PC-9 (cell line): ENCODE measurements at regions of chr1 and their contacts with region 1.

Region 1: DNA sequence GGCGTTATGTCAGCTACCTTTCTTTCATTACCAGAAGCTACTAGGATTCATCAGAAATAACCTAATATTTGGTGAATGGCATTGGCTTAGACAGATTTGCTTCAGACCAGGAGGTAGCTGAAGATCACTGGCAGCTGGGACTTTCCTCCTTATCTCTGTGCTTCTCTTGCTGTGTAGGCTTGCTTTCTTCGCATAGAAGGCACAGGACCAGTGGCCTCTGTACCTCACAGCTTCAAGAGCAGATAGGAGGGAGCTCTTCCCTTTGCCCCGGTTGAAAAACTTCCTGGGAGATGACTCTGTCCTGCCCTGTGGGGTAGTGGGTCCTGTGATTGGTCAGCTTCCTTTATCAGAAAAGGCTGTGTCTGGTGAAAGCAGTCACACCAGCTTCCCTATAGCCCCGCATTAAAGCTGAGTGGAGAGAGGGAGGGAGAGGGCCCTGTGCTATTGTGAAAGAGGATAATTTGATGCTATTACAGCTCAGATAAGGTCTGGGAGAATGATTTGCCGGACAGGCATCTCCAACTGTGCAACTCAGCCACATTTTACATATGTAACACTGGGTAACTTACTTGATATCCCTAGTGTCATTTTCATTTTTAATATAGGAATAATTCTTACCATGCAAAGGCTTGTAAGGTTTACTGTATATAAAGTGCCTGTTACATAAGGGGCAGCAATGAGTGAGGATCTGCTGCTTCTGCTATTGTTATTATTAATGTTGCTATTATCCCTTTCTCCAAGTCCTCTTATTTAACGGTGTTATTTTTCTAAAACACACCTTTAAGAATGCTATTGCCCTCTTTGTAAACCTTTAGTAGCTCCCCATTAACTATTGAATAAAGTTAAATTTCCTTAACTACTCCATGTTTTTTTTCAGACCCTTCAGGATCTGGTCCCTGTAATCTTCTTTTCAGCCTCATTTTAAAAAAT is 31.6 kb downstream of the OSBPL9 start:
- DNase-seq: peak; percentile 75 to 90
- H3K4me3 ChIP-seq: peak overlapping the region; percentile 35
- H3K27ac ChIP-seq: peak overlapping the region; percentile 78
- H3K4me1 ChIP-seq: peaks cover 54% of the 10 kb centered on the region
- H3K27me3 ChIP-seq: no peaks in the 10 kb centered on the region
- CTCF ChIP-seq: no peak

Region 2: GRCh38 chr1:51139474-51139873 is 509.0 kb before region 1 on chr1:
- CTCF ChIA-PET with region 1: no interaction called
- POLR2A ChIA-PET with region 1: no interaction called
- intact Hi-C with region 1: no loop called
- DNase-seq: no peak
- H3K4me3 ChIP-seq: no peak overlapping the region
- H3K27ac ChIP-seq: no peak overlapping the region
- H3K4me1 ChIP-seq: no peaks in the 10 kb centered on the region
- H3K27me3 ChIP-seq: no peaks in the 10 kb centered on the region
- CTCF ChIP-seq: peak; percentile 50; the same call in 1 of the 2 replicates

Region 3: GRCh38 chr1:51497340-51497739 is 151.1 kb before region 1 on chr1:
- CTCF ChIA-PET with region 1: no interaction called
- POLR2A ChIA-PET with region 1: interaction called, 10 read pairs
- intact Hi-C with region 1: no loop called
- DNase-seq: no peak
- H3K4me3 ChIP-seq: no peak overlapping the region
- H3K27ac ChIP-seq: no peak overlapping the region
- H3K4me1 ChIP-seq: peaks cover 5% of the 10 kb centered on the region
- H3K27me3 ChIP-seq: no peaks in the 10 kb centered on the region
- CTCF ChIP-seq: no peak

Region 4: DNA sequence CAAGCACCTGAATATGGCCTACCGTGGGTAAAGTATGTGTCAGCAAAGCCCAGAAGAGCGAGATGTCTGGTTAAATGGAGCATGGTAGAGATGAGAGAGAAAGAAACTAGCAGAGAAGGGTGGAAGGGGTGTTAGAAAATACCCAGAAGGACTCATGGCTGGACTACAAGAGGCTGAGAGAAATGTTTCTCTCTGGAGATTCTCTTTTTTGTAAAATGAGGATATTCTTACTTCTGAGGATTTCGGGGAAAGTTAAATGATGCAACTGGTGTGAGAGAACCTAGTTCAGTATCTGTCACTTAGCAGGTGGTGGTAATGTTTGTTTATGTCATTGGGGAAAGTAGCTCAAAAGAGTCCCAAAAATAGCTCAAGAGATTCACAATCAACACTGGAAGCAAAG is 122.2 kb before region 1 on chr1:
- CTCF ChIA-PET with region 1: no interaction called
- POLR2A ChIA-PET with region 1: no interaction called
- intact Hi-C with region 1: no loop called
- DNase-seq: no peak
- H3K4me3 ChIP-seq: no peak overlapping the region
- H3K27ac ChIP-seq: no peak overlapping the region
- H3K4me1 ChIP-seq: no peaks in the 10 kb centered on the region
- H3K27me3 ChIP-seq: no peaks in the 10 kb centered on the region
- CTCF ChIP-seq: no peak

Region 5: DNA sequence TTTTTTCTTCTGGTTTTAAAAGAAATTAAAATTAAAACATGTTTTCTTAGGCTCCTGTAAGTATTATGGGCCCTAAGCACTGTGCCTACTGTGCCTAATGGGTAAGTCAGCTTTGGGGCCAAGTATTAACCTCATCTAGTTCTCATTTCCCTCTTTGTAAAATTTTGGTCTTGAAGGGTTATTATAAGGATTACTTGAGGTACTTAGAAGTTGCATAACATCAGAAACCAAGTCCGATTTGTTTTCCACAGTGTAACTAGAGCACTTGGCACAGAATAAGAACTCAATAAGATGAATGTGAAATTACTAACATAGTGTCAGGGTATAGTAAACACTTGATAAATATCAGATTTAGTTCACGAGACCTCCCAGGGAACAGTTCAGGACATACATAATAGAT is 47.9 kb before region 1 on chr1:
- CTCF ChIA-PET with region 1: no interaction called
- POLR2A ChIA-PET with region 1: no interaction called
- intact Hi-C with region 1: no loop called
- DNase-seq: no peak
- H3K4me3 ChIP-seq: no peak overlapping the region
- H3K27ac ChIP-seq: no peak overlapping the region
- H3K4me1 ChIP-seq: peaks cover under 1% of the 10 kb centered on the region; the same call in 1 of the 2 replicates
- H3K27me3 ChIP-seq: no peaks in the 10 kb centered on the region
- CTCF ChIP-seq: no peak

Region 6: DNA sequence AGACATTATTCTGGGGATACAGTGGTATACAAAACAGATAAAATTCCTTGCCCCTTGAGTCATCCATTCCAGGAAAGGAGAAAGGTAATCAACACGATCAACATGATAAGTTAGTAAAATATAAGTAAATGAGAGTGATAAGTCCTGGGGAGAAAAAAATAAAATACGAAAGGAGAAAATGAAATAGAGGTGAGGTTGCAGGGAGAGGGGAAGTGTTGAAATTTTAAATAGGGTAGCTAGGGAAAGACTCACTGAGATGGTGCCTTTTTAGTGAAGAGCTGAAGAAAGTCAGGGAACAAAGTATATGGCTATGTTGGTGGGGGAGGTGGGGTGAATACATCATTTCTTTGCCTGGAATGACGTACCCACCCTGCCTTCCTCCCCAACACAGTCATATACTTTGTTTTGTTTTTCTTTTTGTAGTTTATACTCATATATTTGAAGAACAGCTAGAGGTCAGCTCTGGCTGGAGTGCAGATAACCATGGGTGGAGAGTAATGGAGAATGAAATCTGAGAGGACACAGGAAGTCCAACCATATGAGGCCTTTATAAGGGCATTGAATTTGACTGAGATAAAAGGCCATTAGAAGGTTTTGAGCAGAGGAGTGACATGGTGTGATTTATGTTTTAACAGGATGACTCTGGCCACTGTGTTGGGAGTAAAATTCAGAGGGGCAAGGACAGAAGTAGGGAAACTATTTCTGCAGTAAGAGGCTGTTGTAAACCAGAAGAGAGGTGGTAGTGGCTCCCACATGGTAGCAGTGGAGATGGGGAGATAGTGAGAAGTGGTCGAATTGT is 23.3 kb after region 1 on chr1:
- CTCF ChIA-PET with region 1: interaction called, 10 read pairs
- POLR2A ChIA-PET with region 1: interaction called, 9 read pairs
- intact Hi-C with region 1: no loop called
- DNase-seq: peak in 1 of 2 experiments; percentile 34
- H3K4me3 ChIP-seq: no peak overlapping the region
- H3K27ac ChIP-seq: no peak overlapping the region
- H3K4me1 ChIP-seq: peaks cover 13% of the 10 kb centered on the region
- H3K27me3 ChIP-seq: no peaks in the 10 kb centered on the region
- CTCF ChIP-seq: no peak

Region 7: DNA sequence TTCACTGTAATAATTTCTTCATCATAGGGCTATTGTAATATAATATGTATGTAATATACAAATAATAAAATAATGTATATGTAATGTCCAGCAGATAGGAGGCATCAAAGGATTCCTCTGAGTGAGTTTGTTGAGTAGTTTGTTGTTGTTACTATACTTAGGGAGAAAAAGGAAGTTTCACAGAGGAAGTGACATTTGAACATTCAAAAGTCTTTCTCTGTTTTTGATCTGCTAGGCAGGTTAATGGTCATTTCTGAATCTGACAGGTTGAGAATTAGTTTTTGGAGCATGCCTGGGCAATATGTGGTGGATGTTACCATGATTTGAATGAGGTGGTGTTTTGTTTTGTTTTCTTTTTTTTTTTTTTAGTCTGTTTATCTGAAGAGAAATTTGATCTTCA is 128.0 kb after region 1 on chr1:
- CTCF ChIA-PET with region 1: no interaction called
- POLR2A ChIA-PET with region 1: interaction called, 19 read pairs
- intact Hi-C with region 1: no loop called
- DNase-seq: no peak
- H3K4me3 ChIP-seq: no peak overlapping the region
- H3K27ac ChIP-seq: no peak overlapping the region
- H3K4me1 ChIP-seq: no peaks in the 10 kb centered on the region
- H3K27me3 ChIP-seq: no peaks in the 10 kb centered on the region
- CTCF ChIP-seq: no peak

Region 8: DNA sequence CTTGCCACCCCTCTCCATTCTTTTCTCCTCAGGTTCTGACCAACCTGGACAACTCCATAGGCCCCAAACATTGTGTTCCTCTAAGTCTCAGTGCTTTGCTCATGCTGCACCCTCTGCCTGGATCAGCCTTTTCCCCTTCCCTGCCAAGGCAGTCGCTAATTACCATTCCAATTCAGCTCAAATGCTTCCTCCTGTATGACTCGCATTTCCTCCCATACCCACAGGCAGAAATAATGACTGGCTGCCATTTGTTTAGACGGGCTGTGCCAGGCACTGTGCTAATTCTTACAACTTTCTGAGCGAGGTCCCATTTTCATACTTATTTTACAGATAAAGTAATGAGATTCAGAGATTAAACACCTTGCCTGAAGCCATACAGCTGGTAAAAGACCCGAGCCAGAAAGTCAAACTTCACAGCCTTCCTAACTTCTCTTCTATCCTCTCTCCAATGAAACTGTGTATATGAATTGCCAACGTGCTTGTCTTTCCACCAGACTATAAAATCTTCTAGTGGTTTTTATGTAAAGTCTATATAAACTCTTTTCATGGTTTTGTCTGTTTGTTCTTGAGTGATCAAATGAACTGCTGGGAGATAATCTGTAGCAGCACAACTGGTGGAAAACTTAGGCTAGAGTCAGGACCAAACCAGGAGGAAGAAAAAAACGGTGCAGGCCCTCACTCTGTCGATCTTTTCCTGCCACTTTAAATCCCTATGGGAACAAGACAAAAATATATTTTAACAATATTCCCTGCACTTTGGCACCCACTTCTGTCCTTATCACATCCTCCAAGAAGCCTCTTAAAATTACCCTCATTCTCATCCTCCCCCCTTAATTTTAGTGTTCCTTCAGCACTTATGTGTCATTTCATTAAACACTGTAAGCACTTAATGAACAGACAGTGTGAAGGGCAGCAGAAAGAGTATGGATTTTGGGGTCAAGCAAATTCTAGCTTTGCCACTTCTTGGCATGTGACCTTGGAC is 308.4 kb after region 1 on chr1:
- CTCF ChIA-PET with region 1: no interaction called
- POLR2A ChIA-PET with region 1: no interaction called
- intact Hi-C with region 1: no loop called
- DNase-seq: no peak
- H3K4me3 ChIP-seq: no peak overlapping the region
- H3K27ac ChIP-seq: no peak overlapping the region
- H3K4me1 ChIP-seq: no peaks in the 10 kb centered on the region
- H3K27me3 ChIP-seq: no peaks in the 10 kb centered on the region
- CTCF ChIP-seq: no peak